PC-3 (cell line): ENCODE measurements at regions of chr12 and their contacts with region 1.

Region 1: DNA sequence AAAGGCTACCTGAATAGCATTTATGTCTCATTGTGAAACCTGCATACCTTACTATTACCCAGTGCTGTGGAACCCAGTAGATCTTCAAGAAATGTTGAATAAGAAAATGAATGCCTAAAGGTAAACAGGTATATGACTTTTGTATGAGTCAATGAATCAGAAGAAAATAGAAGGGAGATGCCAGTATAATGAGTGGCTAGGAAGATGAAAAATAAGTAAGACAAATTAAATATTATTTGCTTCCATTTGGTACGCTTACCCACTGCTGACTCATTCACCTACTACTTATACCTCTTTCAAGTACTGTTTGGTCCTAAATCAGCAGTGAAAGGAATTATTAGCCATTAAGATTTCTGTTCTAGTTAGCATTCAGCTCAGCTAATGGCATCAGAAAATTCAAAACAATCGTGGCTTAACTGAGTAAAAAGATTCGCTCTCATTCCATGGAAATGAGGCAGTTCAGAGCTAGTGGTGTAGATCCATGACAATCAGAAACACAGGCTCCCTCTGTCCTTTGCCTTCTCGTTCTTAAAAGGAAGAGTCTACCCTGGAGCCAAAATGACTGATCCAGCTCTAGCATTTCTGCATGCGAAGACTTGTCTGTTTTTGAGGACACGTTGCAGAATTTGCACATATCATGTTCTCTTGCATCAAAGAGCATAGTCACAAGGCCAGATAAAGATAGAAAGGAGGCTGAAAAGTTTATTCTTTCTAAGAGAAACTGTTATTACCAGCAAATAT is 705.8 kb upstream of the USP15 start:
- DNase-seq: peak; percentile 74
- ATAC-seq: peak; percentile 91
- H3K4me3 ChIP-seq: peak overlapping the region; percentile 5; the same call in 1 of the 2 replicates
- H3K27ac ChIP-seq: peak overlapping the region; percentile 28; the same call in 1 of the 2 replicates
- H3K4me1 ChIP-seq: peaks cover 26% of the 10 kb centered on the region
- H3K27me3 ChIP-seq: no peaks in the 10 kb centered on the region
- CTCF ChIP-seq: no peak

Region 2: DNA sequence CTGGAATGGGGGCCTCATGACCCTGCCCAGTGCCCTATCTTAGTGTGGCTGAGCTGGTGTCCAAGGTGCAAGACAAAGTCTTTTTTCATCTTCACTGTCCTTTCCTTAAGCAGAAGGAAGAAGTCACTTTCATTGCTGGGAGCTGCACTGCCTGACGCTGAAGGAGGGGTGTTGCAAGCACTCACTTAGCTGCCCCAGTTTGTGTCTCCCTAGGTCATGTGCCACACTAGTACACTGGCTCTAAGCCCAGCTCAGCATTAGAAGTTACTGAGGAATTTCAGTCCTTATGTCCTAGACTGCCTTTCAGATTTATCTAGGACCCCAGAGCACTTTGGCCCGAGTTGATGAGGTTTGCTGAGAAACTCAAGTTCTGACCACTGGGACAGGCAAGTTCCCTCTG is 246.2 kb before region 1 on chr12:
- CTCF ChIA-PET with region 1: no interaction called
- POLR2A ChIA-PET with region 1: no interaction called
- intact Hi-C with region 1: no loop called
- DNase-seq: no peak
- ATAC-seq: no peak
- H3K4me3 ChIP-seq: no peak overlapping the region
- H3K27ac ChIP-seq: no peak overlapping the region
- H3K4me1 ChIP-seq: no peaks in the 10 kb centered on the region
- H3K27me3 ChIP-seq: no peaks in the 10 kb centered on the region
- CTCF ChIP-seq: no peak

Region 3: DNA sequence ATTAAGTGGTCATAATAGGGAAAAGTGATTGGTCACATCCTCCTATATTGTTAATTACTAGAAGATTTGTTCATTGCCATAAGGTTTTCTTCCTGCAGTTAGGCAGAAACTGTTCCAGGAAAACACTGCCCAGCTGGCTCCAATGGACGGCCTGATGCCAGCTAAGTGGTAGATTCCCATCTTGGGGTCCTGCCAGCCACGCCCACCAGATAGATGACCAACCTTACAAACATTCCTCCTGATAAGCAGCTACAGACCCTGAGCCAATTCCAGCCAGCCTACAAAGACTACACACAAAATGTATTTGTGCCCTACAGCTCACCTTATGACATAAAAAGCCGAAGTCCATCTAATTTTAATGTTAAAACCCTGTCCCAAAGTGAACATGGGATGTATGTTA is 19.9 kb after region 1 on chr12:
- CTCF ChIA-PET with region 1: no interaction called
- POLR2A ChIA-PET with region 1: no interaction called
- intact Hi-C with region 1: no loop called
- DNase-seq: no peak
- ATAC-seq: no peak
- H3K4me3 ChIP-seq: no peak overlapping the region
- H3K27ac ChIP-seq: no peak overlapping the region
- H3K4me1 ChIP-seq: no peaks in the 10 kb centered on the region
- H3K27me3 ChIP-seq: no peaks in the 10 kb centered on the region
- CTCF ChIP-seq: no peak

Region 4: GRCh38 chr12:61739925-61740324 is 185.5 kb after region 1 on chr12:
- CTCF ChIA-PET with region 1: no interaction called
- POLR2A ChIA-PET with region 1: no interaction called
- intact Hi-C with region 1: loop called (anchors 10 kb)
- DNase-seq: no peak
- ATAC-seq: no peak
- H3K4me3 ChIP-seq: no peak overlapping the region
- H3K27ac ChIP-seq: no peak overlapping the region
- H3K4me1 ChIP-seq: peaks cover 8% of the 10 kb centered on the region; the same call in 1 of the 2 replicates
- H3K27me3 ChIP-seq: no peaks in the 10 kb centered on the region
- CTCF ChIP-seq: no peak

Region 5: DNA sequence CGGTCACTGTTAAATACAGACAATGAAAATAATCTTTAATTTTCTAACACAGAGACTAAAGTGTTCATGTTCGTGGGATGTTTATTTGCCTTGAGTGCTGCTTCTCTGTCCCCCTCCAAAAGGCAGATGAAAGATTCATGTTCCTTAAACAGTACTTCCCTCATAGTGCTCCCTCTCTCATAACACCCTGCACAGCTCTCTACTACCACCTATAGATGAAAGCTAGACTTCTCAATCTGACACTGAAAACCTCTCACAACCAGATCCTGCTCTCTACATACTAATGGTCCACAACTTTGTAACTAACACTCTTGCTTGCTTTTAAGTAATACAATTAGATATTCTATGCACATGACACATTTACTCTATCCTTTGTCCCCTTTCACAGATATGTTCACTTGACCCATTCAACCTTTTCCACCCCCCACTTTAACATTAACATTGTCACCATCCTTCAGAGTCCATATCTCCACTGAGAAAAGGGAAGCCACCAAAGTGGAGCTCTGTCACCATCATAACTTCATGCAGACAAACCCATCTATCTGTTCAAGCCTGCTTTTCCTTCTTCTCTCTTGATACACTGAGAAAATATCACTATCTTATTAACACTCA is 439.4 kb after region 1 on chr12:
- CTCF ChIA-PET with region 1: no interaction called
- POLR2A ChIA-PET with region 1: no interaction called
- intact Hi-C with region 1: loop called (anchors 5 kb)
- DNase-seq: peak; percentile 61
- ATAC-seq: peak; percentile 88
- H3K4me3 ChIP-seq: no peak overlapping the region
- H3K27ac ChIP-seq: no peak overlapping the region
- H3K4me1 ChIP-seq: no peaks in the 10 kb centered on the region
- H3K27me3 ChIP-seq: peaks cover 9% of the 10 kb centered on the region; the same call in 1 of the 2 replicates
- CTCF ChIP-seq: peak; percentile 75